Aorta (tissue), 5 donors: ENCODE measurements at regions of chr2 and their contacts with region 1.

Region 1: DNA sequence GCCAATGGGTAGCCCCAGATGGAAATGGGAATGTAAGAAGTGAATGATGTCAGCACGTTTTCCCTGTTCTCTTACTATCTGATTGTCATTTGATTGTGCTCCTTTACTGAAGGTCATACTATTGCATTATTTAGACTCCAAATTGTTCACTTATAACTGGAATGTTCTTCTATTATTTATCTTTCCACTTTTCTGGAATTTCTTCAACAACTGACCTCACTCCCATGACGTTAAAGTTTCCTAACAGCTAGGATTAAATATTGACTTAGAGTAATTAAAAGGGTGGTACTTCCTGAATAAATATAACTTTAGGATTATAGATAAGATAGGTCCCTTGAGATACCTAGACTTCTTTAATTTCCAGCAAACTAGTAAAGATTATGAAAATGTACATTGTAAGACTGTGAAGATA is 10.9 kb upstream of the GULP1 start:
- DNase-seq: no peak
- ATAC-seq: no peak
- H3K4me3 ChIP-seq: no peak overlapping the region
- H3K27ac ChIP-seq: no peak overlapping the region
- H3K4me1 ChIP-seq: no peaks in the 10 kb centered on the region
- H3K27me3 ChIP-seq: no peaks in the 10 kb centered on the region

Region 2: DNA sequence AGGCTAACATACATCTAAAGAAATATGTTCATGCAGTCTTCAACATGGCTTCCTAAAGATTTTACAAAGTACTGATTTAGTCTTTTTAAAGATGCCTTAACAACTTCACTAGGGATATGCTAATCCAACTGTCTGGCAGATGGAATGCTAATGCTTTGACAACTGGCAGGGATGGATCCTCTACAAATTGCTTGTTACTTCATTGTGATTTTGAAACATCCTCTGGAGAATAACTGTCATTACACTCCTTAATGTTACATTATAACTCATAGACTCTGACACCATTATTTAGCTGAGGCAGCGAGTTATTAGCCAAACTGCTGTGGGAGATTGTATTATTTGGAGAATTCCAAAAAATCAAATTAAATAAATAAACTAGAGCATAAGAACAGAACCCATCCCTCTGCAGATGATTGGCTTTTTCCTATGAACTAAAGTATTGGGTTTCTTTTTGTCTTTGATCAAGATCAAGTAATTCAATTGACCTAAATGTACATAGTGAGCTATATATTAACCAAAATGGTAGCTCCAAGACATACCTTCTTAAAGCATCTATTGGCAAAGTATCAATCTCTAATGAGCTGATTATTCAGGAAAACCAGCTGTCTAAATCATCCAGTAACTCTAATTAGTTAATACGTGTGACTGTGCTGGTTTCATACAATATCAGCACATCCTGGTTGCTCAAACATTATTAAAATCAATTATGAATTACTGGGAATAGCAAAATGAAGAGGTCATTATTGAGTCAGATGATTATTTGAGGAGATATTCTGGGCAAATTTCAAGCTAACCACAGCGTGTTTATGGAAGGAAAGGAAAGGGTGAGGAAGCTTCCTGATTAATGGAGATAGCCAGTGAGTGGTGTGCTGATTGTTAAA is 405.3 kb before region 1 on chr2:
- intact Hi-C with region 1: loop called in 1 of 2 experiments (anchors 10 kb)
- DNase-seq: no peak
- ATAC-seq: no peak
- H3K4me3 ChIP-seq: no peak overlapping the region
- H3K27ac ChIP-seq: no peak overlapping the region
- H3K4me1 ChIP-seq: peaks cover 0 to 2% of the 10 kb centered on the region in 2 donors
- H3K27me3 ChIP-seq: no peaks in the 10 kb centered on the region

Region 3: GRCh38 chr2:188227713-188228112 is 53.1 kb before region 1 on chr2:
- intact Hi-C with region 1: loop called in 1 of 2 experiments (anchors 10 kb)
- DNase-seq: no peak
- ATAC-seq: no peak
- H3K4me3 ChIP-seq: no peak overlapping the region
- H3K27ac ChIP-seq: no peak overlapping the region
- H3K4me1 ChIP-seq: no peaks in the 10 kb centered on the region
- H3K27me3 ChIP-seq: no peaks in the 10 kb centered on the region